PC-3 (cell line): ENCODE measurements at regions of chr6 and their contacts with region 1.

Region 1: GRCh38 chr6:2158596-2159271 is 86.7 kb downstream of the GMDS start:
- DNase-seq: peak; percentile 25
- ATAC-seq: no peak
- H3K4me3 ChIP-seq: no peak overlapping the region
- H3K27ac ChIP-seq: no peak overlapping the region
- H3K4me1 ChIP-seq: peaks cover 22% of the 10 kb centered on the region
- H3K27me3 ChIP-seq: no peaks in the 10 kb centered on the region
- CTCF ChIP-seq: peak; percentile 52

Region 2: DNA sequence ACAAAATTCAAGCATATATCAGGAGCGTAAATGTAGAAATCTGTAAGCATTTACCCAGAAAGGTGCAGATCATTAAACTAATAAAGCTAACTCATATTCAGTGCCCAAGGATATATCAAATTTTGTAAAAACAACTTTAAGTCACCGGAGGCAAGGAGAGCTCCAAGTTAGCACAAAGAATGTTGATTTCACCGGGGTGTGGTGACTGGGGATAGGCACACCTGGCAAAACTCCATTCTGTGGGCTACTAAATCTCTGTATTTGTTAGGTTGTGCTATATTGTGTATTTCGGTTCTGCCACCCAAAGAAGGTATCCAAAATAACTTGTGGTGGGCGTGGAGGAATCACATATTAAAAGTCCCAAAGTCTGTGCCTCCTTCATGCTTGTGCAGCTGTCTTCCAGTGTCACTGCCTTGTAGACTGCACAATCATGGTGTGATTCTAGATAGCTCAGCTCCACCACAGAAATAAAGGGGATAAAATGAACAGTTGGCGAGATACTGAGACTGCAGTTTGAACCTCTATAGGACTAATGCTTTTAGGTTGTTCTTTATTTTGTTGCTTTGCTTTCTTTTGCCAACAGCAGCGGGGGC is 24.9 kb before region 1 on chr6:
- CTCF ChIA-PET with region 1: no interaction called
- POLR2A ChIA-PET with region 1: no interaction called
- intact Hi-C with region 1: loop called (anchors 2 kb)
- DNase-seq: peak; percentile 50
- ATAC-seq: peak; percentile 65
- H3K4me3 ChIP-seq: no peak overlapping the region
- H3K27ac ChIP-seq: peak overlapping the region; percentile 32
- H3K4me1 ChIP-seq: peaks cover 42% of the 10 kb centered on the region
- H3K27me3 ChIP-seq: no peaks in the 10 kb centered on the region
- CTCF ChIP-seq: no peak

Region 3: GRCh38 chr6:2179959-2180358 is 21.2 kb after region 1 on chr6:
- CTCF ChIA-PET with region 1: no interaction called
- POLR2A ChIA-PET with region 1: no interaction called
- intact Hi-C with region 1: no loop called
- DNase-seq: no peak
- ATAC-seq: no peak
- H3K4me3 ChIP-seq: no peak overlapping the region
- H3K27ac ChIP-seq: no peak overlapping the region
- H3K4me1 ChIP-seq: no peaks in the 10 kb centered on the region
- H3K27me3 ChIP-seq: no peaks in the 10 kb centered on the region
- CTCF ChIP-seq: no peak

Region 4: GRCh38 chr6:2196079-2196679 is 37.4 kb after region 1 on chr6:
- CTCF ChIA-PET with region 1: no interaction called
- POLR2A ChIA-PET with region 1: no interaction called
- intact Hi-C with region 1: loop called (anchors 5 kb)
- DNase-seq: peak; percentile 76
- ATAC-seq: peak; percentile 43
- H3K4me3 ChIP-seq: no peak overlapping the region
- H3K27ac ChIP-seq: no peak overlapping the region; the same call in 1 of the 2 replicates
- H3K4me1 ChIP-seq: peaks cover 21% of the 10 kb centered on the region
- H3K27me3 ChIP-seq: no peaks in the 10 kb centered on the region
- CTCF ChIP-seq: peak; percentile 89

Region 5: GRCh38 chr6:2245094-2245876 is 86.6 kb after region 1 on chr6 and contains the start of gene GMDS:
- CTCF ChIA-PET with region 1: no interaction called
- POLR2A ChIA-PET with region 1: no interaction called
- intact Hi-C with region 1: no loop called
- DNase-seq: peak; percentile 94
- ATAC-seq: peak; percentile 92
- H3K4me3 ChIP-seq: peak within 1 kb of the TSS; percentile 94
- H3K27ac ChIP-seq: peak within 1 kb of the TSS; percentile 92
- H3K4me1 ChIP-seq: peaks cover 29% of the 10 kb centered on the region
- H3K27me3 ChIP-seq: no peaks in the 10 kb centered on the region
- CTCF ChIP-seq: no peak
- total RNA-seq, gene GMDS: 18.3 and 21.0 TPM in 2 replicates